Mammary epithelial cell (primary cell): ENCODE measurements at regions of chr1 and their contacts with region 1.

Region 1: DNA sequence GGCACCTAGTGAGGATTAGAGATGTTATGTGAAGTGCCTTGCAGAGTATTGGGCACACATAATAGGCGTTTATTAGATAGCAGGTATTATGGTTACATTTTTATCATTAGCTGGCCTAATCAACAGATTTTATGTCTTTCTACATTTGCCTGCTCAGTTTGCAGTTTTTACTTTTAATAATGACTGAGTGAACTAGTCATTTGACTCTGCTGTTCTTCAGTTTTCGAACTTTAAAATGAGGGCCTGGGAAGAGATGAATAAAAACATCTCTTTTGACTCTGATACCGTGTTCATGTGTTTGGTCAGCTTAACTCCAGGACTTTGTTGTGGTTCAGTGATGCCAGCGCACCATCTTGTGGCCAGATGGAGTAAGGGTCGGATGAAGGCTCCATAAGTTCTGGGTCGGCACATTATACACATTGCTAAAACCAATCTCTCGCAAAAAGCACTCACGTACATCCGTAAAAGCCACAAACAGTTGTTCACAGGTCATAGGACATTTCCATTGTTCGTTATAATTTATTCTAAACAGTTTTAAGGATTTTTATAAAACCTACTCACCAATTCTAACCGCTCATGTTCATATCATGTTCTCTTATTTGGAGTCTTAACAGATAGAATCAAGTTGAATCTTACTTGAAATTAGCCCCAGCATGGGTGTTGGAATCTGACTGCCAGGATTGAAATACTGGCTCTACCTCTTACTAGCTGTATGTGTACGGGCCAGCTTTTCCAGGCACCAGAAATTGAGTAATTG is 78.4 kb upstream of the GPR88 start:
- DNase-seq: peak; percentile 57
- H3K4me3 ChIP-seq: no peak overlapping the region
- H3K27ac ChIP-seq: no peak overlapping the region
- H3K4me1 ChIP-seq: no peaks in the 10 kb centered on the region
- H3K27me3 ChIP-seq: no peaks in the 10 kb centered on the region
- CTCF ChIP-seq: peak; percentile 91

Region 2: DNA sequence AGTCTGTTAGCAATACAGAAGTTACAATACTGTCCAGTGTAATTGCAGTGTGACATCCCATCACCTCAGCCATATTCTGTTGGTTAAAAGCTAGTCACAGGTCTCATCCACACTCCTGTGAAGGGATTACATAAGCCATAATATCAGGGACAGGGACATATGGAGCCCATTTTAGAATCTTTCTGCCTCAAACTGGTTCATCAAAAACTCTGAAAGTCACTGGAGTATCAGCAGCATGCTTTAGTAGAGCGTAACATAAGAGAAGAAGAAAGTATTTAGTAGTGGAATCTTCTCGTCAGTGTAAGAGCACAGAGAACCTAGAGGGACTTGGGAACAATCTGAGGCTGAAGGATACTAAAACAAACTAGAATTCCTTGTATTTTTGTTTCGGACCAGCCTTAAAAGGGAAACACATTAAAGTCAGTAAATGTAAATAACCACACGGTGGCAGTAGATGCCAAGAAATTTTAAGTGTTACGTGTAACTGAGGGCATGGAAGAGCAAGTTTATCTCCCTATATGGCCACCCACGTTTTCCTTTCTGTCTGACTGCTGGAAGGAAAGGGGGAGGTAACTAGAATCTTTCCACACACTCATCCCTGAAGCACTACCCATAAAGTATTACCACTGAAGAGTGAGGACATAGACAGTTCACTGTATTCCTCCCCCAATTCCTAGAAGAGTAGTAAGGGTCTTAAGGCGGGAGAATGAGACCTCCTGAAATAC is 651.0 kb before region 1 on chr1:
- CTCF ChIA-PET with region 1: no interaction called
- dilution Hi-C with region 1: no loop called
- in situ Hi-C with region 1: loop called (anchors 10 kb)
- intact Hi-C with region 1: loop called (anchors 1 kb)
- DNase-seq: peak; percentile 81
- H3K4me3 ChIP-seq: no peak overlapping the region
- H3K27ac ChIP-seq: peak overlapping the region; percentile 16
- H3K4me1 ChIP-seq: peaks cover 6% of the 10 kb centered on the region
- H3K27me3 ChIP-seq: no peaks in the 10 kb centered on the region
- CTCF ChIP-seq: peak; percentile 47 to 49

Region 3: DNA sequence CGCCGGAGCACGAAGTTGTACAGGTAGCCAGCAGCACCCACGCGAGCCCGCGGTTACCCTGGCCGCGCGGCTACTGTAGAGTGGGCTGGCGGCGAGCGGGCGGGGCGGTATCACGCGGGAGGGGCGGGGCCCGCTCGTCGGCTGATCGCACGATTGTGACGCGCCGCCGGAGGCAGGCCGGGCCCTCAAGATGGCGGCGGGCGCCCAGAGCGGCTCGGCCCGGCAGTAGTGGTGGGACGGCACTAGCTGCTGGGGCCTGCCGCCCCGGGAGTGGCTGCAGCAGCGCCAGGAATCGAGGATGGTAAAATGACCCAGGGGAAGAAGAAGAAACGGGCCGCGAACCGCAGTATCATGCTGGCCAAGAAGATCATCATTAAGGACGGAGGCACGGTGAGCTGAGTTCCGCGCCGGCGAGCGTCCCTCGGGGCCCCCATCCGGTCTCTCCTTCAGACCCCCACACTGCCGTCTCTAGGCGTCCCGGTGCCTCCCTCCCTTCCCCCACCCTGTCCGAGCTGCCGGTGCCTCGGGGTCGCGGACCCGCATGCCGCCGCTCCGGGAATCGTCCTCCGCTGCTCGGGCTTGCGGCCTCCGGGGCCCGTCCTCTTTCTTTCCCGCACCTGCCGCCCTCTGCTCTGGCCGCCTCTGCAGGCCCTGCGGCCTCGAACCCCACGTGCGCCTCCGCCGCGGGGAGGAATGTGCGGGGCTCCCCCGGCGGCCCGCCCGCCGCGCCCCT is 421.4 kb before region 1 on chr1:
- CTCF ChIA-PET with region 1: no interaction called
- dilution Hi-C with region 1: no loop called
- in situ Hi-C with region 1: no loop called
- intact Hi-C with region 1: loop called (anchors 5 kb)
- DNase-seq: peak; percentile 87
- H3K4me3 ChIP-seq: peak overlapping the region; percentile 59 to 95 (median 93)
- H3K27ac ChIP-seq: peak overlapping the region; percentile 97
- H3K4me1 ChIP-seq: peaks cover 6% of the 10 kb centered on the region
- H3K27me3 ChIP-seq: no peaks in the 10 kb centered on the region
- CTCF ChIP-seq: no peak

Region 4: DNA sequence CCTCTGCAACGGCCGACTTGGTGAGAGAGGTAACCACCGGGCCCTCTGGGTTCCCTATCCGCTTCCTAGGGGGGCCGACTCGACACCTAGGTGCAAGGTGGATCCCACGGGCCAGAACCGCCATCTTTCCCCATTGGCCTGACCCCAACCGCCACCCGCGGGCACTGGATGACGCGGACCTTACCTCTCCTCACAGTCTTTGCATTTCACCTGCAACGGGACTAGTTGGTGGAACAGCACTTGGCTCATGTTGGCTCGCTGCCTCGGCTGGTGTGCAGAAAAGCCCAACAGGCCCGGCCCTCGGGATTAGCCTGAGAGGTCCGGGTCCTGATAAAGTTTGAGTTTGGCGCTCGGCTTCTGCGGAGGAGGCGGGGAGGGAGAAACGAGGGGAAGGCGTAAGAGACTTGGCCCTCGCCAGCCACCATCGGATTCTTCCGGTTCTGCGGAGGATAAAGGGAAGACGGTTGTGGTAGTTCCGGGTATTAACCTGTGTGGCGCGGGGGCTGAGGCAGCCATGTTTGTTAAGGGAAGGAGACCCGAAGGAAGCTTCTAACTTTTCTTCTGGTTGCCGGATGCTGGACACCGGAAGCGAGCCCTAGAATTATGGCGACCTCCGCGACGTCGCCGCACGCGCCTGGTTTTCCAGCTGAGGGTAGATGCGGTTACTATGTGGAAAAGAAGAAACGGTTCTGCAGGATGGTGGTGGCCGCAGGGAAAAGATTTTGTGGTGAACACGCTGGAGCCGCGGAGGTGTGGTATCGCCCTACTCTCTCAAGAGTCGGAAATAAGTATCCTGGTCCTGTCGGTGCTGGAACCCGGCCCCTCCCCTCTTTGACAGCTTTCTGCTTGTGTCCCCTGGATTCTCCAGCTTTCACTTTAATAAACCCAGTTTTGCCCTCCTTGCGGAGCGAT is 326.7 kb before region 1 on chr1 and contains the starts of genes SASS6 and TRMT13:
- CTCF ChIA-PET with region 1: no interaction called
- dilution Hi-C with region 1: no loop called
- in situ Hi-C with region 1: no loop called
- intact Hi-C with region 1: loop called (anchors 1 kb)
- DNase-seq: peak; percentile 97
- H3K4me3 ChIP-seq: peak within 1 kb of the TSS; percentile 77 to 91 (median 90)
- H3K27ac ChIP-seq: peak within 1 kb of the TSS; percentile 54
- H3K4me1 ChIP-seq: peaks cover 6% of the 10 kb centered on the region
- H3K27me3 ChIP-seq: no peaks in the 10 kb centered on the region
- CTCF ChIP-seq: no peak
- total RNA-seq, gene SASS6: 2.8 to 6.0 TPM
- total RNA-seq, gene TRMT13: 11.0 to 14.3 TPM

Region 5: DNA sequence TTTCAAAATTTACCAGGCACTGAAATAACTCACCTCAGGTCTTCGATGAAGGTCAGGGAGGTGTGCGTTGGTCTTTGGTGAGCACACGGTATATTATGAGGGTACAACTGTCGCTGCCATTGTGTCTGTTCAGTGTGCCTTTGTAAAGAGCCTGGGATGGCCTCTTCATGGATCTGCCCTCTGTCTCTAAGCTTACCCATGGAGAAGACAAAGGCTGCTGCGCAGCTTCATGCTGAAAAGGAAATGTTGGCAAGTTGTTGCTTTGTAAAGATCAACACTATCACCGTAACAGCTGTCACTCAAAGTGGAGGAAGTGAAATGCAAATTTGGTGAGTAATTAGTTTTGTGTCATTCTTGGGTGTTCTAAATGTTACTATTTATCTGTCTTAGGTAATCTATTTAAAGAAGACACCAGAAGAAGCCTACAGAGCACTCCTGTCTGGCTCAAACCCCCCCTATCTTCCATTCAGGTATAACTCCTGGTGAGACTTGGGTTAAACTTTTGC is 35.7 kb before region 1 on chr1:
- CTCF ChIA-PET with region 1: interaction called, 14 read pairs
- dilution Hi-C with region 1: no loop called
- in situ Hi-C with region 1: no loop called
- intact Hi-C with region 1: no loop called
- DNase-seq: no peak
- H3K4me3 ChIP-seq: no peak overlapping the region
- H3K27ac ChIP-seq: no peak overlapping the region
- H3K4me1 ChIP-seq: no peaks in the 10 kb centered on the region
- H3K27me3 ChIP-seq: no peaks in the 10 kb centered on the region
- CTCF ChIP-seq: no peak

Region 6: DNA sequence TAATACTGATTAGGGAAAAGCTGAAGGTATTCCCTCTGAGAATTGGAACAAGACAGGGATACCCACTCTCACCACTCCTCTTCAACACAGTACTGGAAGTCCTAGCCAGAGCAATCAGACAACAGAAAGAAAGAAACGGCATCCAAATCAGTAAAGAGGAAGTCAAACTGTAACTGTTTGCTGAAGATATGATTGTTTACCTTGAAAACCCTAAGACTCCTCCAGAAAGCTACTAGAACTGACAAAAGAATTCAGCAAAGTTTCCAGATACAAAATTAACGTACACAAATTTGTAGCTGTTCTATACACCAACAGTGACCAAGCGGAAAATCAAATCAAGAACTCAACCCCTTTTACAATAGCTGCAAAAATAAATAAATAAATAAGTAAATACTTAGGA is 356.5 kb after region 1 on chr1:
- CTCF ChIA-PET with region 1: no interaction called
- dilution Hi-C with region 1: no loop called
- in situ Hi-C with region 1: no loop called
- intact Hi-C with region 1: no loop called
- DNase-seq: no peak
- H3K4me3 ChIP-seq: no peak overlapping the region
- H3K27ac ChIP-seq: no peak overlapping the region
- H3K4me1 ChIP-seq: no peaks in the 10 kb centered on the region
- H3K27me3 ChIP-seq: no peaks in the 10 kb centered on the region
- CTCF ChIP-seq: no peak

Region 7: GRCh38 chr1:100866041-100866900 is 406.7 kb after region 1 on chr1:
- CTCF ChIA-PET with region 1: interaction called, 3 read pairs
- dilution Hi-C with region 1: no loop called
- in situ Hi-C with region 1: loop called in 1 of 2 experiments (anchors 10 kb)
- intact Hi-C with region 1: loop called (anchors 1 kb)
- DNase-seq: peak; percentile 48
- H3K4me3 ChIP-seq: no peak overlapping the region
- H3K27ac ChIP-seq: peak overlapping the region; percentile 2
- H3K4me1 ChIP-seq: peaks cover 21% of the 10 kb centered on the region
- H3K27me3 ChIP-seq: no peaks in the 10 kb centered on the region
- CTCF ChIP-seq: peak; percentile 49 to 65